MCF 10A (cell line): ENCODE measurements at regions of chr10 and their contacts with region 1.

Region 1: DNA sequence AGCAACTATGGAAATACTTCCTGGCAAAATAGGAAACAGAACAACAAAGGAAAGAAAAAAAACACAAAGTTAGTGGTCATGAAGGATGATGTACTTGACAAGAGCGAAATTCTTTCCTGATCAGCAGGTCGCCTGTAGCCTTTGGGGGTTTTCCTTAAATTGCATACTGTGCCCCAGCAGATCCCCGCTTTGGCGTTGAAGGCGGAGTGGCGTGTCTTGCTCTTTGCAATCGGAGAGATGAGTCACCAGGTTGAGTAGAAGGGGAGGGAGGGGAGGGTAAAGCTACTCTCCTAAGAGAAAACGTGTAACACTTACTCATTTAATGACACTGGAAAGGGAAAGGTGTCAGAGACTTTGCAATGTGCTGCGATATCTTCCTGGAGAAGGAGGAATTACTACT is 587.2 kb downstream of the SORCS1 start:
- DNase-seq: peak; percentile 92
- H3K4me3 Mint-ChIP-seq: peak overlapping the region; percentile 48
- H3K27ac Mint-ChIP-seq: peak overlapping the region; percentile 67
- H3K4me1 Mint-ChIP-seq: peaks cover 26% of the 10 kb centered on the region
- H3K27me3 Mint-ChIP-seq: no peaks in the 10 kb centered on the region
- CTCF ChIP-seq: no peak

Region 2: GRCh38 chr10:106111246-106111645 is 466.0 kb before region 1 on chr10:
- CTCF ChIA-PET with region 1: no interaction called
- POLR2A ChIA-PET with region 1: no interaction called
- intact Hi-C with region 1: loop called (anchors 1 kb)
- DNase-seq: peak; percentile 64
- H3K4me3 Mint-ChIP-seq: no peak overlapping the region
- H3K27ac Mint-ChIP-seq: peak overlapping the region; percentile 8
- H3K4me1 Mint-ChIP-seq: peaks cover 13% of the 10 kb centered on the region
- H3K27me3 Mint-ChIP-seq: no peaks in the 10 kb centered on the region
- CTCF ChIP-seq: no peak